HepG2 (cell line): ENCODE measurements at regions of chr1 and their contacts with region 1.

Region 1: DNA sequence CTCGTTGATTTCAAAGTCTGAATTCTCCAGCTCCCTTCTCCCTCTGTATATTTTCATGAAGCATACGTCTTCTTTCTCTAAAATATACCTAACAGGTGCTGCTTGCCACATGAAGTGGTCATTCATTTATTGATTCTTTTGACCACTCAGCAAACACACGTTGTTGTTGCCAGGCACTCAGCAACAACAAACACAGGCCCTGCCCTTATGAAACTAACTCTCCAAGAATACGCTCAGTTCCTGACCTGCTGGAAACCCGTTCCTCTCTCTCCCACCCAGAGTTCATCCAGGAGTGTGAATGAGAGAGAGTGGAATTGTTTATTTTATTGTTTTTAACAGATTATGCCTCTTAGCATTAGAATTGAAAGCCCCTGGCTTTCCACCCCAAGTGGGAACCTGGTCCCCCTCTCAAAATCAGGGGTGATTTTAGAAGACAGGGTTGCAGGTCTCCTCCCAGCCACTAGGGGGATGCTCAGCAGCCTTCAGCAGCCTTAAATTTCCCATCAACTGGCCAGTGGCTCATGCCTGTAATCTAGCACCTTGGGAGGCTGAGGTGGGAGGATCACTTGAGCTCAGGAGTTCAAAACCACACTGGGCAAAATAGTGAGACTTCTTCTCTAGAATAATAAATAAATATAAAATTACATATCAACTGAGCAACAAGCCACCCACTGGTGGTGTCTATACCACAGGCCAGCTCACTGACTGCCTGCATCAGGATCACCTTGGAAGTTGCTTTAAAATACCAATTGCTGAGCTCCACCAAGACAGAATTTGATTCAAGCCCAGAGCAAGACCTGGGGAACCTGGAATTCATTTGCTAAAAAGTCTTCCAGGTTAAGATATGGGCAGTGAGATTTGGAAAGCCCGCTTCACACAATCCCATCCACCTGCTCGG is 181.0 kb upstream of the KLHDC7A start:
- DNase-seq: peak; percentile 13
- ATAC-seq: peak; percentile 57
- H3K4me3 ChIP-seq: no peak overlapping the region
- H3K27ac ChIP-seq: no peak overlapping the region
- H3K4me1 ChIP-seq: no peaks in the 10 kb centered on the region
- H3K27me3 ChIP-seq: no peaks in the 10 kb centered on the region; a peak in 1 of 5 replicates
- CTCF ChIP-seq: peak; percentile 67
- EP300 ChIP-seq: no peak
- POLR2A ChIP-seq: no peak
- RAD21 ChIP-seq: 0 out of 2 replicates have a peak, but pooled peaks have one; percentile 22

Region 2: DNA sequence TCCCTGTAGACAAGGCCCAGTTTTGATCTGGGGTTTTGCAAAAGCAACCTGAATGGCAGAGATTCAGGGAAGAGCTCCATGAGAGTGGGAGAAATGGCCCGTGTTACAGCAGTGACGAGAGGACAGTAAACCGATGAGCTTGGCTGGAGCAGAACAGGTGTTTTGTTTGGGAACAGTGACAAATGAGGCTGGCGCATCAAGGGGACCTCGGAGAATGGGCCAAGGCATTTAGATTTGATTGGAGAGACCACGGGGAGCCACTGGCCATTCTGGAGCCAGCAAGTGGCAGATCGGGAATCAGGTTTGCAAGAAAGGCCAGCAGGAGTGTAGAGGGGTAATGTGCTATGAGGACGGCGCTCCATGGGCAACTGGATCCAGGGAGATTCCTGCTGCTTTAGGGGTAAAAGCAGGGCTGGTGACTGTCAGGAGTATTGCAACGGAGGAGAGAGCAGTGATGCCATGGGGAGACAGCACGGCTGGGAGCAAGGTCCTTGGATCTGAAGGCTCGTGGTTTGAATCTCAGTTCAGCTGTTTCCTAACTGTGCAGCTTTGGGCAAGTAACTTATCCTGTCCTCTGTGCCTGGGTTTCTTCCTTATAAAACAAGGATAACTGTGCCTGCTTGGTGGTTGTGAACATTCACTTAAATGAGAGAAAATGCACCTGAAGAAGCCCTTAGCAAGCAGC is 171.1 kb after region 1 on chr1:
- CTCF ChIA-PET with region 1: no interaction called
- POLR2A ChIA-PET with region 1: no interaction called
- in situ Hi-C with region 1: no loop called
- intact Hi-C with region 1: loop called (anchors 5 kb)
- DNase-seq: no peak
- ATAC-seq: no peak
- H3K4me3 ChIP-seq: no peak overlapping the region
- H3K27ac ChIP-seq: no peak overlapping the region
- H3K4me1 ChIP-seq: no peaks in the 10 kb centered on the region
- H3K27me3 ChIP-seq: peaks cover 0 to 5% of the 10 kb centered on the region in 2 experiments; a peak in 3 of 5 replicates
- CTCF ChIP-seq: no peak
- EP300 ChIP-seq: no peak
- POLR2A ChIP-seq: no peak
- RAD21 ChIP-seq: no peak

Region 3: DNA sequence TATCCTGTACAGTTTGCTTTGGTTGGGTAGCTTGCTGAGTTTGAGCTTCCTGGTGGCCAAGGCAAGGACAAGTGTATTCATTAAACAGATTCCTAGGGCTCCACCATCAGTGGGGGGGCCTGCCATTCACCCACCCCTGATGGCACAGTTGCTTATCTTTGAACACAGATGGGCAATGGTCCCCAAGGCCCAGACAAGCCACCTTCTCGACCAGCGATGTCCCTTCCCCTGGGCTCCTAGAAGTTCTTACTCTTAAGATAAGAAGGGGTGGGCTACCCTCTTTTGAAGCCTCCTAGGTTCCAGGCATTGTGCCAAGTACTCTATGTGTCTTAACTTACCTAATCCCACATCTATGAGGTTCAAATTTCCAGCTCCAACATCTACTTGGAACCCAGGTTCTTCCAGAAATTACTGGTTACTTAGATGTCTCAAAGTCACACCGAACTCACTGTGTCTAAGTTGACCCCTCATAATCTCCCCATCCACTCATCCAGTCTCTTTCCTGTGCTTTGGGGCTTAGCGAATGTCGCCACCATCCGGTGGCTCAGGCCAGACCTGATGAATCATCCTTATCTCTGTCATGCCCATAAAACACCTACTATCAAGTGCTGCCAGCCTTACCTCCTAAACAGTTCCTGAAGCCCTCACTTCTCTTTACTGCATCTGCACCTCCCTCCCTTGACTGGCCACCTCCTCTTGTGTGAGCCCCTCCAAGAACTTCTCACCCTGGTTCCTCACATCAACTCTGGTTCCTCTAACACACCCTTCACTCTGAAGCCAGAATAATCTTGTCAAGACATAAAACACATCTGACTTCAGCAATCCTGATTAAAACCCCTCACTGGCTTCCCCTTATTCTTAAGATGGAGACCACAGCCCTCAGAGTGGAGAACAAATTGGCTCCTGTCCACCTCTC is 231.2 kb after region 1 on chr1:
- CTCF ChIA-PET with region 1: interaction called, 11 read pairs
- POLR2A ChIA-PET with region 1: no interaction called
- in situ Hi-C with region 1: no loop called
- intact Hi-C with region 1: loop called (anchors 5 kb)
- DNase-seq: peak; percentile 21
- ATAC-seq: peak; percentile 69
- H3K4me3 ChIP-seq: no peak overlapping the region
- H3K27ac ChIP-seq: no peak overlapping the region
- H3K4me1 ChIP-seq: no peaks in the 10 kb centered on the region
- H3K27me3 ChIP-seq: peaks cover 0 to 8% of the 10 kb centered on the region in 2 experiments; a peak in 2 of 5 replicates
- CTCF ChIP-seq: peak; percentile 78
- EP300 ChIP-seq: no peak
- POLR2A ChIP-seq: no peak
- RAD21 ChIP-seq: peak; percentile 55; the same call in 1 of the 2 replicates